MCF 10A (cell line): ENCODE measurements at regions of chr16 and their contacts with region 1.

Region 1: GRCh38 chr16:22190776-22191531 is 15.1 kb upstream of the EEF2K start:
- DNase-seq: peak; percentile 99
- H3K4me3 Mint-ChIP-seq: peak overlapping the region; percentile 78
- H3K27ac Mint-ChIP-seq: peak overlapping the region; percentile 95
- H3K4me1 Mint-ChIP-seq: peaks cover 34% of the 10 kb centered on the region
- H3K27me3 Mint-ChIP-seq: no peaks in the 10 kb centered on the region
- CTCF ChIP-seq: no peak

Region 2: DNA sequence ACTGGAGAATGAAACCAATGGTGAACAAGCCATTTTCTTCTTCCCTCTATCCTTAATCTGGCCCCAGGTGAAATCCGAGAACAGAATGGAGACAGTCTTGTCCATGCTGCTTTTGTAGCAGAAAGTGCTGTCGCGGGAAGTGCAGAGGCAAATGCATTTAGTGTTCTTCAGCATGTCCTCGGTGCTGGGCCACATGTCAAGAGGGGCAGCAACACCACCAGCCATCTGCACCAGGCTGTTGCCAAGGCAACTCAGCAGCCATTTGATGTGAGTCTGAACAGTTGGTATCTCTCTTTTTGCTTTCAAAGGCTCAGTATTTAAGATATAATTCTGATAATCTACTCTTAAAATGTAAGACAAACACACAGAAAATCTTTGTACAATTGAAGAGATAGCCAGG is 219.1 kb before region 1 on chr16:
- CTCF ChIA-PET with region 1: interaction called, 11 read pairs
- POLR2A ChIA-PET with region 1: interaction called, 5 read pairs
- intact Hi-C with region 1: no loop called
- DNase-seq: no peak
- H3K4me3 Mint-ChIP-seq: no peak overlapping the region
- H3K27ac Mint-ChIP-seq: peak overlapping the region; percentile 20
- H3K4me1 Mint-ChIP-seq: peaks cover 5% of the 10 kb centered on the region
- H3K27me3 Mint-ChIP-seq: no peaks in the 10 kb centered on the region
- CTCF ChIP-seq: no peak

Region 3: DNA sequence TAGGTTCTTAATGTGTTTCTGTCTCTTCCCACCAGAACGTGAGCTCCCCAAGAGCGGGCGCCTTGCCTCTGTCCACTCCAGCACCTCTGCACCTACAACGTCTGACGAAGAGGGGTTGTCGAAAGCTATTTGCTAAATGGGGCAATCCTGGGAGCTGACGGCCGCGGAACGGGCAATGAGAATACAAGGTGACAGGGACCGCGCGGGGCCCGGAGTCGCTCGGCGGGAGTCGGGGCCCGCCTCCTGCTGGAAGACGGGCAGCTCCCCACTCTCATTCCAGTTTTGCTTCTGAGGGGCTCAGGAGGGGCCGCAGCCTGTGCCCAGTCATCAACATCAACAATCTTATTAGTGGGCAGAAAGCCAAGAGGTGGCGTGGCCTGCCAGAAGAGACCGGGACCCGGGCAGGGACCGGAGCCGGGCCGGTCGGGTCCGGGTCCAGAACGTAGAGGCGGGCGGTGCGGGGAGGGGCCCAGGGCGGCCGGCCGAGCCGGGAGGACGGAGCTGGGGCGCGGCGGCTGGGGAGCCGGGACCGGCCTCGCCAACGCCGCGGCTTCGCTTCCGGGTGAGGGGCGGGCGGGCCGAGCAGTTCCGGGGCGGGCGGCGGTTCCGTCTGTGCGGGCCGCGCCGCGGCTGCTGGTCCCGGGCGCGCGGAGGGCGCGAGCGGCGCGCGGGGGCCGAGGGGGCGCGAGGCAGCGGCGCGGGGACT is 183.3 kb before region 1 on chr16 and contains the start of gene MOSMO:
- CTCF ChIA-PET with region 1: interaction called, 62 read pairs
- POLR2A ChIA-PET with region 1: interaction called, 50 read pairs
- intact Hi-C with region 1: no loop called
- DNase-seq: peak; percentile 74
- H3K4me3 Mint-ChIP-seq: peak within 1 kb of the TSS; percentile 90
- H3K27ac Mint-ChIP-seq: peak within 1 kb of the TSS; percentile 70
- H3K4me1 Mint-ChIP-seq: peaks cover 26% of the 10 kb centered on the region
- H3K27me3 Mint-ChIP-seq: no peaks in the 10 kb centered on the region
- CTCF ChIP-seq: no peak
- total RNA-seq, gene MOSMO: 16.4 and 17.1 TPM in 2 replicates

Region 4: DNA sequence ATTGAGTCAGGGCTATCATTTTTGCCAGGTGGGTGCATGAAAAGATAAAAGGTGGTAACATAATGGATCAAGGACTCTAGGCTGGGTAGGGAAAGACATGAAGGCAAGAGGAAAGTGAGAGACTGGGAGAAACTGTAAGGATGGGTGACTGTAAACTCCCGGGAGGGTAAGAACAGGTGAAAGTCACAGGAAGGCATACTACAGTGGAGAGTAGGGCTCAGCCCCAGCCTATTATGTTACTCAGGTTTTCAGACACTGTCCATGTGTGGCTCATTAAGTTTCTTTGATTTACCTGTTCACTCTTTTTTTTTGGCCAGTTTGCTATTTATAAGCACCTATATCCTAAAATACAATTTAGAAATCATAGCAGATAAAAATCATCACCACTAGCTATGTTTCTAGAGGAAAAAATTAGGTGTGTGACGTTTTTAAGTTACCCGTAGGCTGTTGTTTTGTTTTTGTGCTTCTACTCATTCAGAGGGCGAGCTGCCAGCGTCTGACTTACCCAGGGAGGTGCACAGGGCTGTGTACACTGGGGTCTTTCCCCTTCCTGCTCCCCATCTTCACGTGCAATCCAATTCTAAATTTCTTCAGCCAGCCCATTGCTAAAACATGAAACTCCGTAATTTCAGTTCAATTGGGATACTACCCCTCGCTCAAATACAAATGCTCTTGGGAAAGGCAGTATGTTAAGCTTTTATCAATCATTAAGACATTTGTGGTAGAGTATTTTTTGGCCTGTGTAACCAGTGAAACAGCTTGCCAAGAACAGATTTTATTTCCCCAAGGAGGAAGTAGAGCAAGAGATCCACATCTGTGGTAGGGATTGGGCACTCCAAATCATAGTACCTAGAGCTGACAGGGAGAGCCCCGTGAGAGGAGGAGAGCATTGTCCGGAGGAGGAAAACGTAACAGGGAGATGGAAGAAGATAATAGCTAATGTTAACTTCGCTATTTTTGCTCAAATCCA is 120.3 kb before region 1 on chr16:
- CTCF ChIA-PET with region 1: interaction called, 17 read pairs
- POLR2A ChIA-PET with region 1: interaction called, 18 read pairs
- intact Hi-C with region 1: no loop called
- DNase-seq: peak; percentile 63
- H3K4me3 Mint-ChIP-seq: no peak overlapping the region
- H3K27ac Mint-ChIP-seq: no peak overlapping the region
- H3K4me1 Mint-ChIP-seq: peaks cover 2% of the 10 kb centered on the region
- H3K27me3 Mint-ChIP-seq: no peaks in the 10 kb centered on the region
- CTCF ChIP-seq: no peak

Region 5: DNA sequence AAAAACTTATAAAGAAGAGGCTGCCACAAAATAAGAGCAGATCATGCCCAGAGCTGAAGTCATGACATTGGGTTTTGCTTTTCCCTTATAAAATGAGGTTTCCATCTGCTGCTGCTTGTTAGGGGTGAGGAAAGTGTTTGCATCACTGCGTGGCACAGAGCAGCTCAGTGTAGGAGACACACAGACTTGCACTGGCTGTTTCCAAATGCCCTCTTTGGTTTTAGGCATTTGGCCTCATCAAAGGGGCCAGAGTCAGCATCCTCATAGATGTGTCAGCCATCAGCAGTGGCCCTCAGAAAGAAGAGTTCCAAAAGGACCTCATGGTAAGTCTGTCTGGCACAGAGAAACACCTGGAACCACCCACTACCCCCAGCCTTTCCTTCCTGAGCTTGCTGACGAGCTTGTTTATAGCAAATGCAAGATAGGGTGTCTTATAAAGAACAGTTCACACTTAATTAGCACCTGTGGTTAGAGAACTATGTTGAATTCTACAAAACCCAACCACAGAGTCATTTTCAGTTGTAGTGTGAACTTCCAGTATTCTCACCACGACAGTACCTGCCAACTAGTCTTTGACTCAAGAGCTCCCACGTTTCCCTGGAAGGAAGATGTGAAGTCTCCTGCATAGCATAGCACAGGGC is 81.6 kb before region 1 on chr16:
- CTCF ChIA-PET with region 1: interaction called, 13 read pairs
- POLR2A ChIA-PET with region 1: no interaction called
- intact Hi-C with region 1: no loop called
- DNase-seq: no peak
- H3K4me3 Mint-ChIP-seq: no peak overlapping the region
- H3K27ac Mint-ChIP-seq: no peak overlapping the region
- H3K4me1 Mint-ChIP-seq: no peaks in the 10 kb centered on the region
- H3K27me3 Mint-ChIP-seq: peaks cover 56% of the 10 kb centered on the region
- CTCF ChIP-seq: no peak

Region 6: GRCh38 chr16:22297114-22297878 is 106.3 kb after region 1 on chr16 and contains the start of gene POLR3E:
- CTCF ChIA-PET with region 1: interaction called, 64 read pairs
- POLR2A ChIA-PET with region 1: interaction called, 82 read pairs
- intact Hi-C with region 1: loop called (anchors 1 kb)
- DNase-seq: peak; percentile 98
- H3K4me3 Mint-ChIP-seq: peak within 1 kb of the TSS; percentile 86
- H3K27ac Mint-ChIP-seq: peak within 1 kb of the TSS; percentile 96
- H3K4me1 Mint-ChIP-seq: peaks cover 33% of the 10 kb centered on the region
- H3K27me3 Mint-ChIP-seq: no peaks in the 10 kb centered on the region
- CTCF ChIP-seq: peak; percentile 89
- total RNA-seq, gene POLR3E: 53.2 and 73.8 TPM in 2 replicates

Region 7: GRCh38 chr16:22318690-22319358 is 127.9 kb after region 1 on chr16:
- CTCF ChIA-PET with region 1: no interaction called
- POLR2A ChIA-PET with region 1: no interaction called
- intact Hi-C with region 1: no loop called
- DNase-seq: peak; percentile 47
- H3K4me3 Mint-ChIP-seq: no peak overlapping the region
- H3K27ac Mint-ChIP-seq: no peak overlapping the region
- H3K4me1 Mint-ChIP-seq: no peaks in the 10 kb centered on the region
- H3K27me3 Mint-ChIP-seq: no peaks in the 10 kb centered on the region
- CTCF ChIP-seq: peak; percentile 65